Heart left ventricle (tissue), 16 donors: ENCODE measurements at regions of chr11 and their contacts with region 1.

Region 1: GRCh38 chr11:121534131-121535093 is 81.6 kb upstream of the SORL1-AS1 start:
- DNase-seq: no peak
- ATAC-seq: peak in 3 of 4 donors; percentile 68 to 80 (median 78)
- H3K4me3 ChIP-seq: no peak overlapping the region
- H3K27ac ChIP-seq: no peak overlapping the region
- H3K4me1 ChIP-seq: peaks cover 0 to 3% (median 0%) of the 10 kb centered on the region in 12 donors
- H3K27me3 ChIP-seq: no peaks in the 10 kb centered on the region
- CTCF ChIP-seq: peak in 11 of 12 donors; percentile 12 to 61 (median 47)
- POLR2A ChIP-seq: no peak

Region 2: GRCh38 chr11:121464352-121464946 is 70.0 kb before region 1 on chr11:
- intact Hi-C with region 1: loop called in 2 of 10 experiments (anchors 5 to 10 kb)
- DNase-seq: peak; percentile 63 to 87 (median 72)
- ATAC-seq: peak; percentile 89 to 93 (median 92)
- H3K4me3 ChIP-seq: peak overlapping the region in 1 of 12 donors; percentile 7
- H3K27ac ChIP-seq: peak overlapping the region in 6 of 12 donors; percentile 9 to 78 (median 20)
- H3K4me1 ChIP-seq: peaks cover 0 to 57% (median 20%) of the 10 kb centered on the region in 12 donors
- H3K27me3 ChIP-seq: no peaks in the 10 kb centered on the region
- CTCF ChIP-seq: no peak
- POLR2A ChIP-seq: no peak